Activated CD4-positive, alpha-beta T cell treated with anti-CD3 and anti-CD28 coated beads for 36 hours (primary cell): ENCODE measurements at regions of chr2 and their contacts with region 1.

Region 1: GRCh38 chr2:118221666-118222594 is 133.7 kb downstream of the INSIG2 start:
- DNase-seq: peak; percentile 46
- ATAC-seq: peak; percentile 73
- H3K4me3 Mint-ChIP-seq: no peak overlapping the region
- H3K27ac Mint-ChIP-seq: no peak overlapping the region
- H3K4me1 Mint-ChIP-seq: peaks cover 19% of the 10 kb centered on the region
- H3K27me3 Mint-ChIP-seq: peaks cover 56% of the 10 kb centered on the region

Region 2: DNA sequence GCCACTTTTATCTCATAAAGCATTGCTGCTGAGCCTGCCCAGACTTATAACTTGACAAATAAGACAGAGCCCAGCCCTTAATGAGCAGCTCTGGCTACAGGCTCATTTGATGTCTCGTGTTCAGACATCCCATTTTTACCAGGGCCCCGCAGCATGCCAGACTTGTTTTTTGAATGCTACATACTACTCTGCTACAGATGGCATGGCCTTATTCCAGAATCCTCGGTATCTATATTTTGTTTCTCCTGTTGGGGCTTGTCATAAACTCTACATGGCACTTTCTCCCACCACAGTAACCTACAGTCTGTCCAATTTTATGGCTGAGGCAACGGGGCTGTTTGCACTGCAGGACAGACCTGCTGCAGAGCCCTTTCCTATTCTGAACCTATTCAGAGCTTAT is 586.4 kb before region 1 on chr2:
- CTCF ChIA-PET with region 1: no interaction called
- POLR2A ChIA-PET with region 1: no interaction called
- intact Hi-C with region 1: no loop called
- DNase-seq: no peak
- ATAC-seq: no peak
- H3K4me3 Mint-ChIP-seq: no peak overlapping the region
- H3K27ac Mint-ChIP-seq: no peak overlapping the region
- H3K4me1 Mint-ChIP-seq: no peaks in the 10 kb centered on the region
- H3K27me3 Mint-ChIP-seq: no peaks in the 10 kb centered on the region

Region 3: GRCh38 chr2:118046634-118047210 is 175.2 kb before region 1 on chr2:
- CTCF ChIA-PET with region 1: interaction called, 6 read pairs
- POLR2A ChIA-PET with region 1: no interaction called
- intact Hi-C with region 1: loop called (anchors 5 kb)
- DNase-seq: no peak
- ATAC-seq: no peak
- H3K4me3 Mint-ChIP-seq: no peak overlapping the region
- H3K27ac Mint-ChIP-seq: no peak overlapping the region
- H3K4me1 Mint-ChIP-seq: peaks cover 2% of the 10 kb centered on the region
- H3K27me3 Mint-ChIP-seq: peaks cover 46% of the 10 kb centered on the region

Region 4: GRCh38 chr2:118134650-118135049 is 87.3 kb before region 1 on chr2:
- CTCF ChIA-PET with region 1: no interaction called
- POLR2A ChIA-PET with region 1: no interaction called
- intact Hi-C with region 1: no loop called
- DNase-seq: no peak
- ATAC-seq: no peak
- H3K4me3 Mint-ChIP-seq: no peak overlapping the region
- H3K27ac Mint-ChIP-seq: no peak overlapping the region
- H3K4me1 Mint-ChIP-seq: peaks cover 12% of the 10 kb centered on the region
- H3K27me3 Mint-ChIP-seq: peaks cover 2% of the 10 kb centered on the region

Region 5: DNA sequence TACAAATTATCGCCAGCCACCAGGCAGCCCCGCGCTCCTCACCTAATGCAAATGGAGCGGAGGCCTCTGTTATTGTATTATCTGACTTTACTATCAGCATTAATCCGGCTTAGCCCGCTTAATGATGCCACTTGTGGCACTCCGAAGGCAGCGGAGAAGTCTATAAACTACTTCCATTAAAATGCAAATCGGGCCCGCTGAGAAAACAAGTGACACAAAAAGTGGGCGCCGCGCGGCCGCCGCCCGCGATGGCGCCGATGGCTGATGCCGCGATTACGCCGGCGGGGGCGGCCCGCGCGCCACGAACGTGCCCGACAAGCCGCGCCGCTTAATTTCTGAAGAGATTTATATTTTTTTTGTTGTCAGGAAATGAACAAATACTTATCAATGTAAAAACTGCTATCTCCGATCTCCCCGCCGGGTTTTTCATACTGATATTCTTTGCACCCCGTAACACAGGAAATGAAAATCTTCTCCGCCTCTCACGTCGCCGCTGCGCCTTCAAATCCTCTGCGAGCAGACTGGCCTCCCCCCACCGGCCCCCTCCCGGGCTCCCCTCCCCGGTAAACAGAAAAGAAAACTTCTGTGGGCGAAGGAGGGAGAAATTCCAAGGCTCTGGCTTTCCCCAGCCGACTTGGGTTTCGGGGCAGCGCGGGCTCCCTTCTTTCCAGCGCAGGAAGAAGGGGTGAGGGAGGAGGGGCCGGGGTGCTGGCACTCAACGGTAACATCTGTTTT is 88.2 kb after region 1 on chr2:
- CTCF ChIA-PET with region 1: interaction called, 3 read pairs
- POLR2A ChIA-PET with region 1: no interaction called
- intact Hi-C with region 1: loop called (anchors 2 to 10 kb)
- DNase-seq: peak; percentile 83
- ATAC-seq: peak; percentile 86
- H3K4me3 Mint-ChIP-seq: peak overlapping the region; percentile 76
- H3K27ac Mint-ChIP-seq: peak overlapping the region; percentile 93
- H3K4me1 Mint-ChIP-seq: peaks cover 7% of the 10 kb centered on the region
- H3K27me3 Mint-ChIP-seq: no peaks in the 10 kb centered on the region

Region 6: DNA sequence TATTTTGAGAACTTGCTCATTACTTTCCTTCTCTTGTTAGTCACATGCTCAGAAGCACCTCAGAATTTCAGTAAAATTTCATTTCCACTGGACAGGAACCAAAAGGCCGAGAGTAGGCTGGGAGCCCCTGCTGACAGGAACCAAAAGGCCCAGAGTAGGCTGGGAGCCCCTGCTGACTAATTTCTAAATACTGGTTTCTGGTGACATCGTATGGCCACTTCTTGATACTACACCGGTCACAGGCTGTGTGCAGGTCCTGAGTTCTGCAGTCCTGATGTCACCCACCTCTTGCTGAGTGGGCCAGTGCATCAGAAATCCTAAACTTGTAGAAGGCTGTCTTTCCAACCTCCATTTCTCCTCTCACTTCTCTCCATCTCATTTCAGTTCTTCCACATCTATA is 643.2 kb after region 1 on chr2:
- CTCF ChIA-PET with region 1: interaction called, 6 read pairs
- POLR2A ChIA-PET with region 1: no interaction called
- intact Hi-C with region 1: loop called in 1 of 2 experiments (anchors 2 kb)
- DNase-seq: peak; percentile 39
- ATAC-seq: peak; percentile 80
- H3K4me3 Mint-ChIP-seq: no peak overlapping the region
- H3K27ac Mint-ChIP-seq: no peak overlapping the region
- H3K4me1 Mint-ChIP-seq: no peaks in the 10 kb centered on the region
- H3K27me3 Mint-ChIP-seq: peaks cover 29% of the 10 kb centered on the region